Astrocyte of the cerebellum (primary cell): ENCODE measurements at regions of chr2 and their contacts with region 1.

Region 1: GRCh38 chr2:86298411-86299379 is 38.7 kb downstream of the REEP1 start:
- DNase-seq: no peak
- H3K4me3 ChIP-seq: no peak overlapping the region
- CTCF ChIP-seq: peak; percentile 32

Region 2: DNA sequence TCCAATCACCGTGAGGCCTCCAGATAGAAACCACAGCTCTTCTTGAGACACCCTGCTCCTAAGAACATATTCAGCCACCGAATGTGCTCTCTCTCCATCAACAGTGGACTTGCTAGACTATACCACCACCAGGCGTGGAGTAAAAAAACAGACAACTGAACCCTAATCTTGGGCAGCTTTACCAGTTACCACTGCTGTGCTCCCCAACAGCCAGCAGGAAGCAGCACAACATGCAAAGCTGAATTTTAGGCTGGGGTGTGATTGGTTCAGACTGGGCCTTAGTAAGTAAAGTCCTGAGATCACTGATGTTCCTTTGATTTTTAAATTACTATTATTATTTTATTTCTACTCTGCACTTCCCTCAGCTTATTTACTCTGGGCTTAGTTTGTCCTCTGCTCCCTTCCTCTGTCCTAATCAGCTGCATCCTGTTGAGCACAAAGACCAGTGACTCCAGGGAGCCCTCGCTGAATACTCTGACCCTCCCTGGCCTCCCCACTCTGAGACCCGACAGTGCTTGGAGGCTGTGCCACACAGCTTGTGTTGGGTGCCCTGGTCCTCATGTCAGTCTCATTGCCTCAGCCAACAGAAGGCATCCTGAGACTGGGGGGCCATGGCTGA is 77.5 kb before region 1 on chr2:
- in situ Hi-C with region 1: loop called (anchors 5 kb)
- DNase-seq: peak; percentile 48
- H3K4me3 ChIP-seq: no peak overlapping the region
- CTCF ChIP-seq: peak; percentile 98

Region 3: DNA sequence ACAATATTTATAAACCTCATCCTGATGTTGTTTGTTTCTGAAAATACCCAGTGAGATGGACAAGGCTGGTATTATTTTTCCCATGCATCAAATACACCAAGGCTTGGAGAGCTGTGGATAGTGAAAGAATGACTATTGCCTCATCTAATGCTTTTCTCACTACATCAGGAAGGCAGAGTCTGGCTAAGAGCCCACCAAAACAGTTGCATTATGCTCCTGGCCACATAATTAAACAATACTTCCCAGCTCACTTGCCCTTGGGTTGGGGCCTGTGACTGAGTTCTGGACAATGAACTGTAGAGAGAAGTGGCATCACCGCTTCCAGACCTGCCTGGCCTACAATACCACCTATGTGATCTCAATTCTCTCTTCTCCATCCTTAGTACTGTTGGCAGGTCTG is 85.1 kb after region 1 on chr2:
- in situ Hi-C with region 1: loop called (anchors 5 kb)
- DNase-seq: peak; percentile 61
- H3K4me3 ChIP-seq: no peak overlapping the region
- CTCF ChIP-seq: no peak

Region 4: GRCh38 chr2:86794861-86795260 is 496.2 kb after region 1 on chr2:
- in situ Hi-C with region 1: no loop called
- DNase-seq: no peak
- H3K4me3 ChIP-seq: no peak overlapping the region
- CTCF ChIP-seq: no peak